Lower leg skin (tissue), 4 donors: ENCODE measurements at regions of chr15 and their contacts with region 1.

Region 1: GRCh38 chr15:74928771-74929198 is 9.1 kb downstream of the COX5A start:
- DNase-seq: no peak
- H3K4me3 ChIP-seq: no peak overlapping the region
- CTCF ChIP-seq: no peak
- POLR2A ChIP-seq: no peak

Region 2: GRCh38 chr15:74913041-74913440 is 15.7 kb before region 1 on chr15:
- intact Hi-C with region 1: loop called (anchors 2 kb)
- DNase-seq: no peak
- H3K4me3 ChIP-seq: no peak overlapping the region
- CTCF ChIP-seq: no peak
- POLR2A ChIP-seq: no peak